ENCODE measurements at regions of chr2 and their contacts with region 1.

Region 1: GRCh38 chr2:230660294-230661060 is 52.2 kb upstream of the CAB39 start:
- DNase-seq: peak; percentile 41
- ATAC-seq: peak; percentile 47 to 68

Region 2: GRCh38 chr2:231012463-231013205 is 352.2 kb after region 1 on chr2:
- intact Hi-C with region 1: loop called in 1 of 2 experiments (anchors 5 kb)
- DNase-seq: no peak
- ATAC-seq: no peak